ENCODE measurements at regions of chr14 and their contacts with region 1.

Region 1: GRCh38 chr14:35416108-35416750 is 11.7 kb upstream of the NFKBIA start:
- DNase-seq: no peak
- ATAC-seq: no peak
- H3K4me3 ChIP-seq: no peak overlapping the region
- H3K27ac ChIP-seq: no peak overlapping the region
- H3K4me1 ChIP-seq: peaks cover 20% of the 10 kb centered on the region
- H3K27me3 ChIP-seq: no peaks in the 10 kb centered on the region
- CTCF ChIP-seq: no peak
- POLR2A ChIP-seq: no peak
- RAD21 ChIP-seq: no peak

Region 2: DNA sequence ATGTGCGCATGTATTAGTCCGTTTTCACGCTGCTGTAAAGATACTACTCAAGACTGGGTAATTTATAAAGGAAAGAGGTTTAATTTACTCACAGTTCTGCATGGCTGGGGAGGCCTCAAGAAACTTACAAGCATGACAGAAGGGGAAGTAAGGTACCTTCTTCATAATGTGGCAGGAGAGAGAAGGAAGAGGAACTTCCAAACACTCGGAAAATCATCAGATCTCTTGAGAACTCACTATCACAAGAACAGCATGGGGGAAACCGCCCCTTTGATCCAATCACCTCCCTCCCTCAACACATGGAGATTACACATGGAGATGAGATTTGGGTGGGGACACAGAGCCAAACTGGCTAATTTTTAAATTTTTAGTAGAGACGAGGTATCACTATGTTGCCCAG is 744.5 kb before region 1 on chr14:
- CTCF ChIA-PET with region 1: no interaction called
- POLR2A ChIA-PET with region 1: no interaction called
- dilution Hi-C with region 1: no loop called
- in situ Hi-C with region 1: loop called (anchors 25 kb)
- intact Hi-C with region 1: loop called (anchors 5 kb)
- DNase-seq: no peak
- ATAC-seq: no peak
- H3K4me3 ChIP-seq: no peak overlapping the region
- H3K27ac ChIP-seq: no peak overlapping the region
- H3K4me1 ChIP-seq: no peaks in the 10 kb centered on the region; the same call in 1 of the 2 replicates
- H3K27me3 ChIP-seq: no peaks in the 10 kb centered on the region
- CTCF ChIP-seq: no peak
- POLR2A ChIP-seq: no peak
- RAD21 ChIP-seq: no peak

Region 3: GRCh38 chr14:34982417-34983147 is 433.6 kb before region 1 on chr14 and contains the start of gene SRP54:
- CTCF ChIA-PET with region 1: no interaction called
- POLR2A ChIA-PET with region 1: no interaction called
- dilution Hi-C with region 1: no loop called
- in situ Hi-C with region 1: no loop called
- intact Hi-C with region 1: loop called (anchors 1 kb)
- DNase-seq: peak; percentile 98
- ATAC-seq: peak; percentile 94
- H3K4me3 ChIP-seq: peak within 1 kb of the TSS; percentile 58
- H3K27ac ChIP-seq: peak within 1 kb of the TSS; percentile 86
- H3K4me1 ChIP-seq: peaks cover 4% of the 10 kb centered on the region
- H3K27me3 ChIP-seq: no peaks in the 10 kb centered on the region
- CTCF ChIP-seq: peak; percentile 26; the same call in 1 of the 2 replicates
- POLR2A ChIP-seq: peak; percentile 90
- RAD21 ChIP-seq: peak; percentile 37
- total RNA-seq, gene SRP54: 63.3 and 109 TPM in 2 replicates

Region 4: DNA sequence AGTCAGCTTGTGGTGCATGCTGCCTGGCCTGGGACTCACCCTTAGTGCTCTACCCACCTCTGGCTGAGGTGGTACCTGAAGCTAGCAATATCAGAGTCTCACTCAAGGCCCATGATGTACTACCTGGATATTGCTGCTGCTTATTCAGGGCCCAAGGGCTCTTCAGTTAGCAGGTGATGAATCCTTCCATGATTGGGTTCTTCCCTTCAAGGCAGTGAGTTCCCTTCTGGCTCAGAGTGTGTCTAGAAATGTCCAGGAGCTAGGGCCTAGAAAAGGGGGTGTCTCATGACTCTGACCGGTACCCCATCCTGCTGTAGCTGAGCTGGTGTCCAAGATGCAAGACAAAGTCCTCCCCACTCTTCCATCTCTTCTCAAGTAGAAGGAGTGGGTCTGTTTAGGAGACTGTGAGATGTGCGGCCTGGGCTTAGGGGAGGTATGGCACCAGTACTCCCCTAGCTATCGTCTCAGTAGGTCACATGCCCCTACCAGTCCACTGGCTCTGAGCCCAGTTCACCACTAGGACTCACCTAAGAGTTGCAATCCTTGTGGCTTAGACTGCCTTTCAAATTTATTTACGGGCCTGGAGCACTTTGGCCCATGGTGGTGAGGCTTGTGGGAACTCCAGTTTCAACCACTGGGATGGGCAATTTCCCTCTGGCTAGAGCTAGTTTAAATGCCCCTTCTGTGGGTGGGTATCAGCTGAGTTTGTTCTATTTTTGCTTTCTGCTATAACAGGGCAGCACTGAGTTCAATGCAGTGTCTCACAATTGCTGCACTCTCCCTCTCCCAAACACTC is 281.7 kb before region 1 on chr14:
- CTCF ChIA-PET with region 1: interaction called, 4 read pairs
- POLR2A ChIA-PET with region 1: interaction called, 3 read pairs
- dilution Hi-C with region 1: no loop called
- in situ Hi-C with region 1: loop called (anchors 5 kb)
- intact Hi-C with region 1: no loop called
- DNase-seq: no peak
- ATAC-seq: peak; percentile 14; the same call in 1 of the 2 replicates
- H3K4me3 ChIP-seq: no peak overlapping the region
- H3K27ac ChIP-seq: no peak overlapping the region
- H3K4me1 ChIP-seq: no peaks in the 10 kb centered on the region
- H3K27me3 ChIP-seq: no peaks in the 10 kb centered on the region
- CTCF ChIP-seq: no peak
- POLR2A ChIP-seq: no peak
- RAD21 ChIP-seq: no peak

Region 5: GRCh38 chr14:35215110-35215876 is 200.9 kb before region 1 on chr14:
- CTCF ChIA-PET with region 1: interaction called, 9 read pairs
- POLR2A ChIA-PET with region 1: interaction called, 15 read pairs
- dilution Hi-C with region 1: no loop called
- in situ Hi-C with region 1: no loop called
- intact Hi-C with region 1: loop called (anchors 1 kb)
- DNase-seq: peak; percentile 80
- ATAC-seq: peak; percentile 83
- H3K4me3 ChIP-seq: no peak overlapping the region
- H3K27ac ChIP-seq: no peak overlapping the region
- H3K4me1 ChIP-seq: peaks cover 7% of the 10 kb centered on the region
- H3K27me3 ChIP-seq: no peaks in the 10 kb centered on the region
- CTCF ChIP-seq: peak; percentile 84
- POLR2A ChIP-seq: no peak
- RAD21 ChIP-seq: peak; percentile 70

Region 6: DNA sequence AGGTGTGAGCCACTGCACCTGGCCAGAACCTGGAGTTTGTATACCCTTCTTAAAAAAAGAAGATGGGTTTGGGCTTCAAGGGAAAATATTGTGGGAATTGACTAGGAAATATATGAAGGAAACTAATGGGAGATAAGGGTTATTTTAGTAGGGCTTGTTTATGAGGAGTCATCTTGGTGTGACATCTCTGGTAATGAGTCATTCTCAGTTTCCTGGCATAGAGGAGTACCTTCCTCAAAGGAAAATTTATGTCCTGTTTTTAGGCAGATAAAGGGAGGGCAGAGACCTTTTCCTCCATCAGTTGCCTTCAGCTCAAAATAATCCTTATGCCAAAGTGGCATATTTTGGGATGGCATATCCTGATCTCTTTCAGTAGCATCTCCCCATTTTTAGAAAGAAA is 18.9 kb after region 1 on chr14:
- CTCF ChIA-PET with region 1: no interaction called
- POLR2A ChIA-PET with region 1: no interaction called
- dilution Hi-C with region 1: no loop called
- in situ Hi-C with region 1: no loop called
- intact Hi-C with region 1: no loop called
- DNase-seq: peak; percentile 29
- ATAC-seq: no peak
- H3K4me3 ChIP-seq: no peak overlapping the region
- H3K27ac ChIP-seq: no peak overlapping the region
- H3K4me1 ChIP-seq: no peaks in the 10 kb centered on the region
- H3K27me3 ChIP-seq: no peaks in the 10 kb centered on the region; the same call in 1 of the 2 replicates
- CTCF ChIP-seq: no peak
- POLR2A ChIP-seq: no peak
- RAD21 ChIP-seq: no peak